ENCODE measurements at regions of chr6 and their contacts with region 1.

Region 1: DNA sequence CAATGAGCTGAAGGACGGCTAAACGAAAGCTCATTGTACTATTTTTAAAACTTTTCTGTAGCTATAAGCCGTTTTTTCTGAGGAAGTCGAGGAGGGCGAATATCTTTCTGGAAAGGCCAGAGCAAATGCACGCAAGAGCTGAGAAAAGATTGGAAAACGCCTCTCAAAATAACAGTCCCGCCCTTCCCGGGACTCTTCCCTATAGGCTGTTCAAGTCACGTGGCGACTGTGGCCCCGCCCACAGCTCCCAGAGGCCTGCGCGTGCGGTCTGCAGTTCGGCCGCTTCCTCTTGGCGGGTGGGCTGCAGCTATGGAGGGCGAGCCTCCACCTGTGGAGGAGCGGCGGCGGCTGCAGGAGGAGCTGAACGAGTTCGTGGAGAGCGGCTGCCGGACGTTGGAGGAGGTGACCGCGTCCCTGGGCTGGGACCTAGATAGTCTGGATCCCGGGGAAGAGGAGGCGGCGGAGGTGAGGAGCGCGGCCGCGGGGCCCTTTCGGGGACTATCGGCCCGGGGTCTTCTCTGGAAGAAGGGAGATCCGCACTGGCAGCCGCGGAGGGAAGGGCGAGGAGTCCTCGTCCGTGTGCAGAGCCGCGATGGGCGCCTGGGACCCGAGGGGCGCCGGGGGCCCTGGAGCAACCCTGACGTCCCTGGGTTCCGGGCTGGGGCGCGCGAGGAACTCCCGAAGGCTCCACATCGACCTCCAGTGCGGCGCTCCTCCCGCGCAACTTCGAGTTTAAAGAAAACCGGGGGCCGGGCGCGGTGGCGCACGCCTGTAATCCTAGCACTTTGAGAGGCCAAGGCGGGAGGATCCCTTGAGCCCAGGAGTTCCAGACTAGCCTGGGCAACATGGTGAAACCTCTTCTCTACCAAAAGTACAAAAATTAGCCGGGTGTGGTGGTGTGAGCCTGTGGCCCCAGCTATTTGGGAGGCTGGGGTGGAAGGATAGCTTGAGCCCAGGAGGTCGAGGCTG is at the start of gene SNRNP48:
- DNase-seq: peak; percentile 85 to 92 (median 87)
- H3K4me3 ChIP-seq: peak within 1 kb of the TSS; percentile 45 to 56
- H3K4me3 Mint-ChIP-seq: peak within 1 kb of the TSS; percentile 99 to 100 (median 99)
- H3K27ac ChIP-seq: peak within 1 kb of the TSS; percentile 64
- H3K27ac Mint-ChIP-seq: peak within 1 kb of the TSS; percentile 89 to 99 (median 96)
- H3K4me1 ChIP-seq: peaks cover 31% of the 10 kb centered on the region
- H3K4me1 Mint-ChIP-seq: peaks cover 37 to 48% (median 44%) of the 10 kb centered on the region in 4 donors
- H3K27me3 ChIP-seq: no peaks in the 10 kb centered on the region
- H3K27me3 Mint-ChIP-seq: no peaks in the 10 kb centered on the region
- total RNA-seq, gene SNRNP48: 24.0 to 24.4 TPM

Region 2: GRCh38 chr6:7312616-7313504 is 277.4 kb before region 1 on chr6 and contains the start of gene SSR1:
- CTCF ChIA-PET with region 1: interaction called, 4 read pairs
- POLR2A ChIA-PET with region 1: interaction called, 7 read pairs
- intact Hi-C with region 1: loop called (anchors 1 kb)
- DNase-seq: peak; percentile 89 to 93 (median 91)
- H3K4me3 ChIP-seq: peak within 1 kb of the TSS; percentile 95 to 97
- H3K4me3 Mint-ChIP-seq: peak within 1 kb of the TSS; percentile 91 to 100 (median 96)
- H3K27ac ChIP-seq: peak within 1 kb of the TSS; percentile 77
- H3K27ac Mint-ChIP-seq: peak within 1 kb of the TSS; percentile 83 to 98 (median 95)
- H3K4me1 ChIP-seq: peaks cover 53% of the 10 kb centered on the region
- H3K4me1 Mint-ChIP-seq: peaks cover 33 to 62% (median 47%) of the 10 kb centered on the region in 4 donors
- H3K27me3 ChIP-seq: no peaks in the 10 kb centered on the region
- H3K27me3 Mint-ChIP-seq: no peaks in the 10 kb centered on the region
- total RNA-seq, gene SSR1: 150 to 158 TPM

Region 3: DNA sequence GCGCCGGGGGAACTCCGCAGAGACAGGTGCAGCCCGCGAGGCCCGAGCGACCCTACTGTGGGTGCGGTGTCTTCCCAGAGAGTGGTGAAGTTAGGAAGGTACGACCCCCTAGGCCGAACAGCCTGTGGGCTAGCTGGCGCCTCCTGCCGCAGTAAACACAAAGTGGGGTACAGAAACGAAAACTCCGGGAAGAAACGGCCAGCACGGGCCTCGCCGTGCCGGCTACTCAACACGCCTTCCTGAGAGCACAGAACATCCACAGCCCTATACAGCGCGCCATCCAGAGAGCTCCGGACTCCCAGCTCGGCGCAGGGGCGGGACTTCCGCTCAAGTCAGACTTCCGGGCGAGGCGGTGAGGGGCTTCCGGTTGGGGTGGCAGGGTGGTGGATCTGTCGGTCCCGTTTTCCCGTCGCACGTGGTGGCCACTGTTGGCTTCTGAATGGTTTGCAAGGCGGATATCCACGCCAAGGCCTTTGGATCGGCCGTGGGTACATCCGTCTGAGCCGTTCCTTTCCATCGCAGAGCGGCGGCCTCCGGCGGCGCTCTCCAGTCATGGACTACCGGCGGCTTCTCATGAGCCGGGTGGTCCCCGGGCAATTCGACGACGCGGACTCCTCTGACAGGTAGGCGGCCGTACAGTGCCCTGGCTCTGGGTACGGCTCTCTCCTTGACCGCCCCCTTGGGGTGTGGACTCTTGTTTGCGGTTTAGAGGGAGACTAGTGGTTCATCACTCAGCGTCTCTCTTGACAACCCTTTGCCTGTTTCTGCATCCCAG is 200.6 kb before region 1 on chr6 and contains the starts of genes CAGE1 and RIOK1:
- CTCF ChIA-PET with region 1: no interaction called
- POLR2A ChIA-PET with region 1: interaction called, 8 read pairs
- intact Hi-C with region 1: loop called (anchors 1 kb)
- DNase-seq: peak; percentile 94 to 96 (median 96)
- H3K4me3 ChIP-seq: peak within 1 kb of the TSS; percentile 91 to 99
- H3K4me3 Mint-ChIP-seq: peak within 1 kb of the TSS; percentile 92 to 97 (median 94)
- H3K27ac ChIP-seq: peak within 1 kb of the TSS; percentile 94
- H3K27ac Mint-ChIP-seq: peak within 1 kb of the TSS; percentile 97 to 100 (median 100)
- H3K4me1 ChIP-seq: peaks cover 30% of the 10 kb centered on the region
- H3K4me1 Mint-ChIP-seq: peaks cover 32 to 51% (median 42%) of the 10 kb centered on the region in 4 donors
- H3K27me3 ChIP-seq: no peaks in the 10 kb centered on the region
- H3K27me3 Mint-ChIP-seq: no peaks in the 10 kb centered on the region
- total RNA-seq, gene CAGE1: 0.17 to 0.33 TPM
- total RNA-seq, gene RIOK1: 22.4 to 26.1 TPM

Region 4: GRCh38 chr6:8102122-8102958 is 512.1 kb after region 1 on chr6 and contains the start of gene EEF1E1:
- CTCF ChIA-PET with region 1: no interaction called
- POLR2A ChIA-PET with region 1: no interaction called
- intact Hi-C with region 1: loop called (anchors 1 kb)
- DNase-seq: peak; percentile 92 to 98 (median 94)
- H3K4me3 ChIP-seq: peak within 1 kb of the TSS; percentile 87 to 95
- H3K4me3 Mint-ChIP-seq: peak within 1 kb of the TSS; percentile 92 to 100 (median 97)
- H3K27ac ChIP-seq: peak within 1 kb of the TSS; percentile 79
- H3K27ac Mint-ChIP-seq: peak within 1 kb of the TSS; percentile 86 to 98 (median 96)
- H3K4me1 ChIP-seq: peaks cover 19% of the 10 kb centered on the region
- H3K4me1 Mint-ChIP-seq: peaks cover 17 to 30% (median 23%) of the 10 kb centered on the region in 4 donors
- H3K27me3 ChIP-seq: no peaks in the 10 kb centered on the region
- H3K27me3 Mint-ChIP-seq: peaks cover 6 to 9% of the 10 kb centered on the region in 2 donors
- total RNA-seq, gene EEF1E1: 14.8 to 20.7 TPM